ENCODE measurements at regions of chr17 and their contacts with region 1.

Region 1: GRCh38 chr17:75405365-75406221 is at the start of gene GRB2:
- DNase-seq: peak; percentile 100
- ATAC-seq: peak; percentile 81
- H3K4me3 Mint-ChIP-seq: peak within 1 kb of the TSS; percentile 90
- H3K27ac Mint-ChIP-seq: peak within 1 kb of the TSS; percentile 96
- H3K4me1 Mint-ChIP-seq: peaks cover 35% of the 10 kb centered on the region
- H3K27me3 Mint-ChIP-seq: no peaks in the 10 kb centered on the region
- total RNA-seq, gene GRB2: 157 to 168 TPM

Region 2: DNA sequence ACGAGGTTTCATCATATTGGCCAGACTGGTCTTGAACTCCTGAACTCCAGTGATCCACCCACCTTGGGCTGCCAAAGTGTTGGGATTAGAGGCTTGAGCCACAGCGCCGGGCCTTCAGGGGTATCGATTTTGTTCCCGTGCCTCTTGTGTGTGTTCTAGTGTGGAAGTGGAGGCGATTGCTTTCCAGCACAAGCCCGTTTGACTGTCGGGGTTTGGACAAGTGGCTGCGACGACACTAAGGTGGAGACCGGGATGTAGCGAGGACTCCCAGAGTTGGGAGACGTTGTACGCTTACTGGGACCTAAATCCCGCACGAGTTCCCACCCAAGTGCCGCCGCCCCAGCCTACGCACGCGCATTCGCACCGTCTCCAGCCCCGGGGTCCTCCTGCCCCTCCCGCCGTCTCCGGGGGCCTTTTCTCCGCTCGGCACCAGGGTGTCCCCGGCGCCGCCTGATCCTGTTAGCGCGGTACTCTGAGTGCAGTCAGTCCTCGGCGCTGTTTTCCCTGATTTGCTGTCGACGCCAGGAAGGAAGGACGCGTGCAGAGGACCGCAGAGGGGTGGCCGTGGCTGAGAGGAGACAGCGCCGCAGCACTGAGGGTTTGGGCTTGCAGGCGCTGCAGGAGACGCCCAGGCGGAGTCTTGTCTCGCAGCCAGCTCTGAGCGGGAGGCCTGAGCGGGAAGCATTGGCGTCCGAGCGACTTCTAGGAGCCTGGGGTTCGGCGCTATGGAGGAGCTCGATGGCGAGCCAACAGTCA is 200.4 kb before region 1 on chr17 and contains the start of gene NUP85:
- CTCF ChIA-PET with region 1: interaction called, 4 read pairs
- POLR2A ChIA-PET with region 1: no interaction called
- intact Hi-C with region 1: loop called in 1 of 2 experiments (anchors 1 kb)
- DNase-seq: peak; percentile 96
- ATAC-seq: peak; percentile 86
- H3K4me3 Mint-ChIP-seq: peak within 1 kb of the TSS; percentile 91
- H3K27ac Mint-ChIP-seq: peak within 1 kb of the TSS; percentile 100
- H3K4me1 Mint-ChIP-seq: peaks cover 18% of the 10 kb centered on the region
- H3K27me3 Mint-ChIP-seq: no peaks in the 10 kb centered on the region
- total RNA-seq, gene NUP85: 130 to 160 TPM

Region 3: DNA sequence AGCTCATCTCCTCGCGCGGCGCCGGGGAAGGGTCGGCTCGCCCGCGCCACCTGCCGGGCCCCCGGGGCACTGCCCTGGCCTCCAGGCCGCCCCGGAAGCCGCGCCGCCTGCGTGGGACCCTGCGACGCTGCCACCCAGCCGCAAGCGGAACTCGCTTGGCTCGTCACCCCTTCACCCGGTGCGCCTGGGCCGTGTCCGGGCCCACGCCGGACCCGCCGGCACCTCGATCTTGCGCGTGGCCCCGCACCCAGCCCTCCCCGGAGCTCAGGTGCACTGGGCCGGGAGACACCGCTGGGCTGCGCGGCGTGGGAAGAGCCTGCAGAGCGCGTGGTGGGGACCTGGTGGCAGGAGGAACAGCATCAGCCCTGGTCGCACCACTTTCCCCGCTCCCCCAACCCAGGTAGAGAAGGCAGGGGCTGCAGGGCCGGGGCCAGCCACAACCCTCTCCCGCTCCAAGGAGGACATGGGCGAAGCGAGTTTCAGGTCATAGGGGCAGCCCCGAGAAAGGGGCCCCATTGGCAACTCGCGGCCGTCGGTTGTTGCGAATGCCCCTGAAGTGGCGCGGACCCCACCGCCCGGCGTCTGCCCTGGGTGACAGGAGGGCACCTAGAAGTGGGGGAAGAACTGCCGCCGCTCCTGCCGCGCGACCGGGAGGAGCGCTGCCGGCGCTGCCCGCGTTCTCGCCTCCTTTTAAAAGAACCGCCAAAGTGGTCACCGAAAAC is 134.2 kb before region 1 on chr17:
- CTCF ChIA-PET with region 1: interaction called, 3 read pairs
- POLR2A ChIA-PET with region 1: interaction called, 4 read pairs
- intact Hi-C with region 1: loop called (anchors 1 to 2 kb)
- DNase-seq: peak; percentile 93
- ATAC-seq: peak; percentile 79
- H3K4me3 Mint-ChIP-seq: peak overlapping the region; percentile 80
- H3K27ac Mint-ChIP-seq: peak overlapping the region; percentile 81
- H3K4me1 Mint-ChIP-seq: peaks cover 21% of the 10 kb centered on the region
- H3K27me3 Mint-ChIP-seq: no peaks in the 10 kb centered on the region

Region 4: DNA sequence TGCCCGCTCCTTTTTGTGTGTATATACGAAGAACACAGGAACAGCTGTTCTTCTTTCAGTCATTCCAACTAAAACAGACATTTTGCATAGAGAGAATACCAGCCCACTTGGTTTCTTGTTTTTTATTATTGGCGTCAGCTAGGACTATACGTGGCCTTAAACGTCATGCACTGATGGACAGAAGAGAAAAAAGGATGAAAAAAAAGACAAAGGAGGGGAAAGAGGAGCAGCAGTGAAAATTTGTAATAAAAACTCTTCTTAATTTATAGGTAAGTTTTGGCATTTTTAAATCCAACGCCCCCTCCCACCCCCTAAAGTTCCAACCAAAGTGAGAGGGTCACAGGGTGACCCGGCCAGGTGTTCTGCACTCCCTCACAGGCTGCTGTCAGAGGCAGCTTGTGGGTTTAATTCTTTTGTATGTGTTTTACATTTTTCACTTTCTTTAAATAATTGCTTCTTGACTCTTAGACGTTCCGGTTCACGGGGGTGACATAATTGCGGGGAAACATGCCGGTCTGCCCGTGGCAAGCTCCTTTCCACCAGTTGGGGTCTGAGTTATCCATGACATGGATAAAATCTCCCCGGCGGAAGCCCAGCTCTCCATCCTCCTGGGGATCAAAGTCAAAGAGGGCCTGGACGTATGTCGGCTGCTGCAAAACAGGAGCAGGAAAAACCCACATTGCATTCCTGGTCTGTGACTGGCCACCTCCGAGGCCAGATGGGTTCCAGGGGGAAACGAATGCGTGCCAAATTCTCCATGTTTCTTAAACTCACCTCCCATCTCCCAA is 85.5 kb before region 1 on chr17:
- CTCF ChIA-PET with region 1: interaction called, 11 read pairs
- POLR2A ChIA-PET with region 1: interaction called, 6 read pairs
- intact Hi-C with region 1: loop called (anchors 1 kb)
- DNase-seq: no peak
- ATAC-seq: no peak
- H3K4me3 Mint-ChIP-seq: no peak overlapping the region
- H3K27ac Mint-ChIP-seq: no peak overlapping the region
- H3K4me1 Mint-ChIP-seq: peaks cover 21% of the 10 kb centered on the region
- H3K27me3 Mint-ChIP-seq: no peaks in the 10 kb centered on the region

Region 5: DNA sequence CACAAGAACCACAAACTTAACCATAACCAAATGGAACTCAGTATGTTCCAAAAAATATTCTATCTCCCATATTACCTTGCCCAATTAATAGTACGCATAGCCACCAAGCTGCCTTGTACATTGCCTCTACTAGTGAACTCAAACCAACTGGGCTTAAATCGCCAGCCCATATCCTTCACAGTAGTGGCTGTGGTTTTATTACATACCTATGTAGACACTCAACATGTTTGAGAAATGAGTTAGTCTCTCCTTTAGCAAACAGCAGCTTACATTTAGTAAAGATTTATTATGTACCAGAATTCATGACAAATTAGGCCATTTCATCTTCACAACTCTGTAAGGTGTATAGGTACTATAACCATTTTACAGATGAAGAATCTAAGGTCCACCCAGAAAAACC is 41.5 kb before region 1 on chr17:
- CTCF ChIA-PET with region 1: interaction called, 4 read pairs
- POLR2A ChIA-PET with region 1: no interaction called
- intact Hi-C with region 1: loop called in 1 of 2 experiments (anchors 2 kb)
- DNase-seq: no peak
- ATAC-seq: no peak
- H3K4me3 Mint-ChIP-seq: no peak overlapping the region
- H3K27ac Mint-ChIP-seq: peak overlapping the region; percentile 83
- H3K4me1 Mint-ChIP-seq: peaks cover 94% of the 10 kb centered on the region
- H3K27me3 Mint-ChIP-seq: no peaks in the 10 kb centered on the region

Region 6: DNA sequence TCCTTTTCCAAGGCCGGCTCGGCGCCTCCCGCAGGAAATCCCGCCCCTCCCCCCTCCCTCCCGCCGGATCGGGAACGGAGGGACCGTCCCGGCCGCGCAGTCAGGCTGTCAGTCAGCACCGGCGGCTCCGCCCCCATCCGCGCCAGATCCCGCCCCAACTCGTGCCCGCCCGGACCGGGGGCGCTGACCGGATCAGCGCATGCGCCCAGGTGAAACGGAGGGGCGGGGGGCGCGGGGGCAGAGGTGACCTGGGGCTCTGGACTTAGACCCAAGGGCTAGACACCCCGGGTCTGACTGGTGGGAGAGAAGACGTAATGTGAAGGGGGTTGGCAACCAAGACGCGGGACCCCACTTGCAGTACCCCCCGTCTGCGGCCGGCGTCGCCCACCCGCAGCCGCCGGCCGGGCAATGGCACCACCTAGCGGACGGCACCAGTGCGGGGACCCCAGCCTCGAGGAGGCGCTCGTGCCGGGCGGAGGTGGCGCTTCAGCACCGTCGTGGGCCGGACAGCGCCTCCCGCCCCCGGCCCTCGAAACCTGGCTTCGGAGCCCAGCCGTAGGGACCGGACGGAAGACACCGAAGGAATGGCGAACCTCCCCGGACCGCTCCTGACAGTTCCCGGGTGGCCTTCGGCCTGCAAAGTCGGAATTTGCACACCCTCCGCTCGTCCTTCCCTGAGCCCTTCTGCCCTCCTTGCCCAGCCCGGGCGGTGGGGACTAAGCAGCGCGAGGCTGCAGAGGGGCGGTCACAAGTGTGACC is 110.1 kb after region 1 on chr17 and contains the start of gene CASKIN2:
- CTCF ChIA-PET with region 1: interaction called, 3 read pairs
- POLR2A ChIA-PET with region 1: no interaction called
- intact Hi-C with region 1: loop called in 1 of 2 experiments (anchors 1 kb)
- DNase-seq: peak; percentile 93
- ATAC-seq: peak; percentile 61
- H3K4me3 Mint-ChIP-seq: peak within 1 kb of the TSS; percentile 68
- H3K27ac Mint-ChIP-seq: no peak within 1 kb of the TSS
- H3K4me1 Mint-ChIP-seq: peaks cover 22% of the 10 kb centered on the region
- H3K27me3 Mint-ChIP-seq: peaks cover 3% of the 10 kb centered on the region
- total RNA-seq, gene CASKIN2: 2.9 to 3.0 TPM

Region 7: GRCh38 chr17:75784473-75785015 is 379.0 kb after region 1 on chr17 and contains the start of gene UNK:
- CTCF ChIA-PET with region 1: no interaction called
- POLR2A ChIA-PET with region 1: no interaction called
- intact Hi-C with region 1: loop called in 1 of 2 experiments (anchors 1 kb)
- DNase-seq: peak; percentile 97
- ATAC-seq: peak; percentile 67
- H3K4me3 Mint-ChIP-seq: peak within 1 kb of the TSS; percentile 91
- H3K27ac Mint-ChIP-seq: peak within 1 kb of the TSS; percentile 100
- H3K4me1 Mint-ChIP-seq: peaks cover 55% of the 10 kb centered on the region
- H3K27me3 Mint-ChIP-seq: peaks cover 1% of the 10 kb centered on the region
- total RNA-seq, gene UNK: 24.5 to 33.7 TPM

Measured in activated CD4-positive, alpha-beta T cell treated with anti-CD3 and anti-CD28 coated beads for 36 hours (primary cell).